Activated CD4-positive, alpha-beta T cell treated with anti-CD3 and anti-CD28 coated beads, Interleukin-2, amount 10 ng/mL, durations not matched to agents 24 days and 14 days (primary cell): ENCODE measurements at regions of chr17 and their contacts with region 1.

Region 1: GRCh38 chr17:77280980-77281903 is 140.5 kb downstream of the SEC14L1 start:
- DNase-seq: peak; percentile 89
- H3K4me3 Mint-ChIP-seq: peak overlapping the region; percentile 66
- H3K27ac Mint-ChIP-seq: peak overlapping the region; percentile 67
- H3K4me1 Mint-ChIP-seq: peaks cover 17% of the 10 kb centered on the region
- H3K27me3 Mint-ChIP-seq: peaks cover 47% of the 10 kb centered on the region

Region 2: GRCh38 chr17:77319211-77320043 is 38.2 kb after region 1 on chr17:
- intact Hi-C with region 1: loop called (anchors 2 kb)
- DNase-seq: peak; percentile 87
- H3K4me3 Mint-ChIP-seq: peak overlapping the region; percentile 86
- H3K27ac Mint-ChIP-seq: peak overlapping the region; percentile 91
- H3K4me1 Mint-ChIP-seq: peaks cover 25% of the 10 kb centered on the region
- H3K27me3 Mint-ChIP-seq: no peaks in the 10 kb centered on the region

Region 3: GRCh38 chr17:77382966-77383612 is 101.8 kb after region 1 on chr17:
- intact Hi-C with region 1: no loop called
- DNase-seq: no peak
- H3K4me3 Mint-ChIP-seq: peak overlapping the region; percentile 61
- H3K27ac Mint-ChIP-seq: peak overlapping the region; percentile 57
- H3K4me1 Mint-ChIP-seq: peaks cover 76% of the 10 kb centered on the region
- H3K27me3 Mint-ChIP-seq: no peaks in the 10 kb centered on the region